ENCODE measurements at regions of chr10 and their contacts with region 1.

Region 1: DNA sequence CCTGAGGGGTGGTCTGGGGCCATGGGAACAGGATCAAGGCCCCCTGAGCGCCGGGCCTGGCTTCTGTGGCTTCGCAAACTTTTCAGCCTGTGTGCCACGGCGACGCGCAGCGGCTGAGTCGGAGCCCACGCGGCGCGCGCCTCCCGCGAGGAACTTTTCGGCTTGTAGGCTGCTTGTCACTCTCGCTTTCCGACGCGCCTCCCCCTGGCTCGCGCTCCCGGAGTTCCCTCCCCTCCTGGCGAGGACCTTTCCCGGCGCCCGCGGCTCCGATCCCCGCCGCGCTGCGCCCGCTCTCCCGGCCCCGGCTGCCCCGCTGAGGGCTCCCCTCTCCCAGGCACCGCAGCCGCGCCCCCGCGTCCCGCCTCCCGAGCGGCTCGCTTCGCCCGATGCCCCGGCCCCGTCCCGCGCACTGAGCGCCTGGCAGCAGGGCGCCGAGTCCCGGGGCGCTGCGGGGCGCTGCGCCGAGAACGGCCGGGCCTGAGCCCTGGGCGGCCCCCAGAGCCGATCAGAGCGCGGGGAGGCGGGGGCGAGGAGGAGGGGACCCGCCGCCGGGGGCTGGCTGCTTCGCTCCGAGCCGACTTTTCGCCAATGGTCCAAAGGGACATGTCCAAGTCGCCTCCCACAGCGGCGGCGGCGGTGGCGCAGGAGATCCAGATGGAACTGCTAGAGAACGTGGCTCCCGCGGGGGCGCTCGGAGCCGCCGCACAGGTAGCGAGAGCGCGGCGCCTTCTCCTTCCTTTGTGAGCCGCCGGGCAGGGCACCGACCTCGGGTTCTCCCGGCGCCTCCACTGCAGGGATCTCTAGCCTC is at the start of gene CACNB2:
- DNase-seq: peak; percentile 69 to 86 (median 81)
- ATAC-seq: peak; percentile 48 to 82 (median 76)
- H3K4me3 ChIP-seq: peak within 1 kb of the TSS; percentile 48 to 90 (median 62)
- H3K27ac ChIP-seq: peak within 1 kb of the TSS; percentile 55 to 93 (median 79)
- H3K4me1 ChIP-seq: peaks cover 0 to 18% (median 3%) of the 10 kb centered on the region in 12 donors
- H3K27me3 ChIP-seq: peaks cover 0 to 36% (median 0%) of the 10 kb centered on the region in 9 donors
- CTCF ChIP-seq: peak in 2 of 12 donors; percentile 4 to 24
- POLR2A ChIP-seq: no peak
- total RNA-seq, gene CACNB2: 28.2 to 63.2 (median 35.9) TPM

Region 2: GRCh38 chr10:18179891-18180290 is 39.5 kb after region 1 on chr10:
- intact Hi-C with region 1: loop called in 1 of 10 experiments (anchors 5 kb)
- DNase-seq: peak in 3 of 5 donors; percentile 37 to 44 (median 40)
- ATAC-seq: peak; percentile 94 to 97 (median 95)
- H3K4me3 ChIP-seq: peak overlapping the region in 8 of 12 donors; percentile 6 to 51 (median 30)
- H3K27ac ChIP-seq: peak overlapping the region; percentile 46 to 93 (median 81)
- H3K4me1 ChIP-seq: peaks cover 0 to 30% (median 19%) of the 10 kb centered on the region in 12 donors
- H3K27me3 ChIP-seq: no peaks in the 10 kb centered on the region
- CTCF ChIP-seq: no peak
- POLR2A ChIP-seq: no peak

Region 3: GRCh38 chr10:18214691-18215563 is 74.6 kb after region 1 on chr10:
- intact Hi-C with region 1: loop called in 7 of 10 experiments (anchors 2 to 10 kb)
- DNase-seq: peak in 1 of 5 donors; percentile 29
- ATAC-seq: peak in 3 of 4 donors; percentile 70 to 81 (median 80)
- H3K4me3 ChIP-seq: peak overlapping the region in 1 of 12 donors; percentile 20
- H3K27ac ChIP-seq: peak overlapping the region in 1 of 12 donors; percentile 9
- H3K4me1 ChIP-seq: peaks cover 0 to 25% (median 2%) of the 10 kb centered on the region in 12 donors
- H3K27me3 ChIP-seq: no peaks in the 10 kb centered on the region
- CTCF ChIP-seq: peak; percentile 63 to 90 (median 78)
- POLR2A ChIP-seq: no peak

Region 4: DNA sequence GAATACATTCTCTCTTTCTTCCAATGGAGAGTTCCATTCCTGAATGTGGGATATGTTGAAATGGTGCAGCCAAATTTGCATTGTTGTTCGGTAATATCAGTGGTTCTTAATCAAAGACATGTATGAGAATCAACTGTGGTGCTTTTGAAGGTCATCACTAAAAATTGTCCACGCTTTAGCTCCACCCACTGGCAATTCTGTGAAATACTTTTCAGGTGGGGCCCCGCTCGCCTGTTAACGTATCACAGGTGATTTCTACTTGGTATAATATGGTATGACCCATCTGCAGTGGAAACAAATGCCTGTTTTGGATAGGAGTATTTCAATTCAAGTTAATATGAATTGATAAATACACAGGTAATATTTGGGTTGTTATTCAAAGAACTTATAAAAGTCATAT is 332.6 kb after region 1 on chr10:
- intact Hi-C with region 1: loop called in 1 of 10 experiments (anchors 5 kb)
- DNase-seq: peak in 2 of 5 donors; percentile 25 to 53
- ATAC-seq: peak in 3 of 4 donors; percentile 7 to 52 (median 40)
- H3K4me3 ChIP-seq: peak overlapping the region in 2 of 12 donors; percentile 9 to 16
- H3K27ac ChIP-seq: peak overlapping the region; percentile 76 to 93 (median 85)
- H3K4me1 ChIP-seq: peaks cover 0 to 36% (median 14%) of the 10 kb centered on the region in 12 donors
- H3K27me3 ChIP-seq: no peaks in the 10 kb centered on the region
- CTCF ChIP-seq: peak in 7 of 12 donors; percentile 10 to 39 (median 27)
- POLR2A ChIP-seq: no peak

Measured in heart left ventricle (tissue), 16 donors.